CD8-positive, alpha-beta T cell (primary cell): ENCODE measurements at regions of chr17 and their contacts with region 1.

Region 1: GRCh38 chr17:21284319-21285163 is at the start of gene MAP2K3:
- DNase-seq: peak; percentile 84 to 97 (median 94)
- ATAC-seq: peak; percentile 65
- H3K4me3 ChIP-seq: peak within 1 kb of the TSS; percentile 78 to 81
- H3K4me3 Mint-ChIP-seq: peak within 1 kb of the TSS; percentile 94
- H3K27ac ChIP-seq: peak within 1 kb of the TSS; percentile 69 to 99
- H3K27ac Mint-ChIP-seq: peak within 1 kb of the TSS; percentile 96
- H3K4me1 ChIP-seq: peaks cover 45% of the 10 kb centered on the region
- H3K4me1 Mint-ChIP-seq: peaks cover 54% of the 10 kb centered on the region
- H3K27me3 ChIP-seq: no peaks in the 10 kb centered on the region
- H3K27me3 Mint-ChIP-seq: no peaks in the 10 kb centered on the region
- CTCF ChIP-seq: no peak
- total RNA-seq, gene MAP2K3: 59.9 to 63.8 TPM

Region 2: GRCh38 chr17:20032636-20033035 is 1251.9 kb before region 1 on chr17:
- CTCF ChIA-PET with region 1: no interaction called
- POLR2A ChIA-PET with region 1: no interaction called
- intact Hi-C with region 1: no loop called
- DNase-seq: no peak
- ATAC-seq: no peak
- H3K4me3 ChIP-seq: no peak overlapping the region
- H3K4me3 Mint-ChIP-seq: no peak overlapping the region
- H3K27ac ChIP-seq: no peak overlapping the region
- H3K27ac Mint-ChIP-seq: no peak overlapping the region
- H3K4me1 ChIP-seq: no peaks in the 10 kb centered on the region
- H3K4me1 Mint-ChIP-seq: peaks cover 6% of the 10 kb centered on the region
- H3K27me3 ChIP-seq: no peaks in the 10 kb centered on the region
- H3K27me3 Mint-ChIP-seq: no peaks in the 10 kb centered on the region
- CTCF ChIP-seq: no peak

Region 3: DNA sequence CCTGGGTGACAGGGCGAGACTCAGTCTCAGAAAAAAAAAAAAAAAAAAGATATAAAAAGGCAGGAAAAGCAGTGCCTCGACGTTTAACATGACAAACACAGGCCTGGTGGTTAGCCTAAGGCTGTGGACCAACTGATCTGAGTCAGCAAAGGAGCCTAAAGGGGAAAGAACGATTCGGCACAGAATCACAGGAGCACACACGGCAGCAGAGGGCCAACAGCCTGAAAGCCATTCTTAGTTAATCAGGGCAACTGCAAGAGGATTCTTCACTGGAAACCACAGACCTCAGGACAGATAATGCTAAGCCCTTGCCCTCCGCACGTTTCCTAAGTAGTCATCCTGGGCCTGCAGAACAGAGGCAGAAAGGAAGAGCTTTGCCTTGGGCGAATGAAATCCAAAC is 85.2 kb before region 1 on chr17:
- CTCF ChIA-PET with region 1: no interaction called
- POLR2A ChIA-PET with region 1: no interaction called
- intact Hi-C with region 1: no loop called
- DNase-seq: no peak
- ATAC-seq: no peak
- H3K4me3 ChIP-seq: no peak overlapping the region
- H3K4me3 Mint-ChIP-seq: no peak overlapping the region
- H3K27ac ChIP-seq: no peak overlapping the region
- H3K27ac Mint-ChIP-seq: no peak overlapping the region
- H3K4me1 ChIP-seq: no peaks in the 10 kb centered on the region
- H3K4me1 Mint-ChIP-seq: peaks cover 35% of the 10 kb centered on the region
- H3K27me3 ChIP-seq: no peaks in the 10 kb centered on the region
- H3K27me3 Mint-ChIP-seq: no peaks in the 10 kb centered on the region
- CTCF ChIP-seq: no peak

Region 4: GRCh38 chr17:21228104-21228503 is 56.4 kb before region 1 on chr17:
- CTCF ChIA-PET with region 1: no interaction called
- POLR2A ChIA-PET with region 1: no interaction called
- intact Hi-C with region 1: no loop called
- DNase-seq: no peak
- ATAC-seq: no peak
- H3K4me3 ChIP-seq: no peak overlapping the region
- H3K4me3 Mint-ChIP-seq: no peak overlapping the region
- H3K27ac ChIP-seq: no peak overlapping the region
- H3K27ac Mint-ChIP-seq: no peak overlapping the region
- H3K4me1 ChIP-seq: no peaks in the 10 kb centered on the region
- H3K4me1 Mint-ChIP-seq: no peaks in the 10 kb centered on the region
- H3K27me3 ChIP-seq: no peaks in the 10 kb centered on the region
- H3K27me3 Mint-ChIP-seq: no peaks in the 10 kb centered on the region
- CTCF ChIP-seq: no peak

Region 5: DNA sequence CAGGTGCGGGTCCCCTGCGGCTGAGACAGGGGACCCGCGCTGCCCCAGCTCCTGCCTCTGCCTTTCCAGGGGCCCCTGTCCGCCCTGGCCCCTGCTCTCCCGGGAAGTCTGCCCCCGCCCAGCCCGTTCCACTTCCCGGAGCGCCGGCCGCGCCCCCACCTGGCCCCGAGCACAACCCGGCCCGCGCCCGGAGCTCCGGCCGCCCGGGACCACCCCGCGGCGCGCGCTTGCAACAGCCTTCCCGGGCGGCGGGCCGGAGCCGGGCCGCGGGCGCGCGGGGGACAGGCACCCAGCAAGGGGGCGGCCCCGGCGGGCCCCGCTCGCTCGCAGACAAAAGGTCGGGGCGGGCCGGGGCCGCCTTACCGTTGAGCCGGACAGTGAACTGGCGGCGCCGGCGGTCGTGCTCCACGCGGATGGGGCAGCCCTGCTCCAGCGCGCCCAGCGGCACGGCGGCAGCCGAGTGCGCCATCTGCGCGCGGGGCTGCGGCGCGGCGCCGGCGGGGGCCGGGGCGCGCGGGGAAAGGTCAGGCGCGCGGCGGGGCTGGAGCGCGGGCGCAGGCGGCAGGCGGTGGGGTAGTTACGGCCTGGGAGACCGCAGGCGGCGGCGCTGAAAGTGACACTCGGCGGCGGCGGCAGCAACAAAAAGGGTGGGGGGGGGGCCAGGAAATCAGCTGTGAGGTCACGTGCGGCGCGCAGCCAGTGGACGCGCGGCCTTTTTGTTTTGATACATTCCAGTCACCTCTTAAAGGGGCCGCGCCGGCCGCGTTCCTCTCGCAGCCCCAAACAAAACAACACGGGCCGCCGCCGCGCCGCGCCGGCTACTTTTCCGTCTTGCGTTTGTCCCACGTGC is 31.5 kb before region 1 on chr17 and contains the start of gene NATD1:
- CTCF ChIA-PET with region 1: interaction called, 4 read pairs
- POLR2A ChIA-PET with region 1: interaction called, 4 read pairs
- intact Hi-C with region 1: loop called (anchors 1 kb)
- DNase-seq: peak; percentile 54 to 92 (median 80)
- ATAC-seq: peak; percentile 79
- H3K4me3 ChIP-seq: peak within 1 kb of the TSS; percentile 55 to 73
- H3K4me3 Mint-ChIP-seq: peak within 1 kb of the TSS; percentile 86
- H3K27ac ChIP-seq: peak within 1 kb of the TSS; percentile 62 to 64
- H3K27ac Mint-ChIP-seq: peak within 1 kb of the TSS; percentile 92
- H3K4me1 ChIP-seq: peaks cover 17% of the 10 kb centered on the region
- H3K4me1 Mint-ChIP-seq: peaks cover 34% of the 10 kb centered on the region
- H3K27me3 ChIP-seq: no peaks in the 10 kb centered on the region
- H3K27me3 Mint-ChIP-seq: no peaks in the 10 kb centered on the region
- CTCF ChIP-seq: no peak
- total RNA-seq, gene NATD1: 6.3 to 6.6 TPM

Region 6: GRCh38 chr17:21457051-21458026 is 172.8 kb after region 1 on chr17:
- CTCF ChIA-PET with region 1: interaction called, 4 read pairs
- POLR2A ChIA-PET with region 1: no interaction called
- intact Hi-C with region 1: loop called (anchors 1 to 2 kb)
- DNase-seq: peak; percentile 81 to 97 (median 90)
- ATAC-seq: peak; percentile 91
- H3K4me3 ChIP-seq: no peak overlapping the region
- H3K4me3 Mint-ChIP-seq: peak overlapping the region; percentile 15
- H3K27ac ChIP-seq: no peak overlapping the region
- H3K27ac Mint-ChIP-seq: peak overlapping the region; percentile 86
- H3K4me1 ChIP-seq: peaks cover 20% of the 10 kb centered on the region
- H3K4me1 Mint-ChIP-seq: peaks cover 22% of the 10 kb centered on the region
- H3K27me3 ChIP-seq: no peaks in the 10 kb centered on the region
- H3K27me3 Mint-ChIP-seq: peaks cover 7% of the 10 kb centered on the region
- CTCF ChIP-seq: peak; percentile 86

Region 7: DNA sequence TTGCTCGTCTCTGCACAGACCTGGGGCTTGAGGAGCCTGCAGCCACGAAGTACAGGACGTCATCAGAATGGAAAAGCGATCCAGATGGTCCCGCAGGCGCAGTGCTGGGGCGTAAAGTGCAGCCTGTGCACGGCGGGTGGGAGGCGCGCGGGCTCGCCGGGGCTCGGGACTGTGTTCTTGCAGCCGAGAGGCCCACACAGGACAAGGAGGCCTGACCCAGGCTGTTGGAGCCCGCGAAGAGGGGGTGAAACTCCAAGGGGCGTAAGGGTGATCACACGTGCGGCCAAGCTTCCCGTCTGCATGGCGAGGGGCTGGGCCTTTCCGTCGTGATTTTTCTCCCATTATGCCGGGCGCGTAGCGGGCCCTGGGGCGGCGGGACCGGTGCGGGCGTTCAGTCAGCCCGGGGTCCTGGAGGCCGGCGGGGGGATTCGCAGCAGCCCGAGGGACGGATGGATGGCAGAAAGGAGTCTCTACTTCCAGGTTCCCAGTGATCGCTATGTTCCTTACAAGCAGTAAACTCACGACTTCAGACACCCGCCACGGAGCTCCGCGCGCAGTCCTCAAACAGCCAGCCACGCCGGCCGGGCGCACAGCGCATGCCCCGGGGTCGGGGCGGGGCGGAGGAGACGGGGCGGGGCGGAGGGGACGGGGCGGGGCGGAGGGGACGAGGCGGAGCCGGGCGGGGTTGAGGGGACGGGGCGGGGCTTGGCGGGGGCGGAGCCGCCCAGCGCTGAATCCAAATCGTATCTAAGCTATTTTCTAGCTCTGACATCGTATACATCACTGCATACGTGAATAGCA is 266.7 kb after region 1 on chr17:
- CTCF ChIA-PET with region 1: no interaction called
- POLR2A ChIA-PET with region 1: no interaction called
- intact Hi-C with region 1: loop called (anchors 2 to 5 kb)
- DNase-seq: peak; percentile 67 to 89 (median 81)
- ATAC-seq: peak; percentile 94
- H3K4me3 ChIP-seq: peak overlapping the region; percentile 59 to 89
- H3K4me3 Mint-ChIP-seq: peak overlapping the region; percentile 86
- H3K27ac ChIP-seq: peak overlapping the region; percentile 18 to 66
- H3K27ac Mint-ChIP-seq: no peak overlapping the region
- H3K4me1 ChIP-seq: peaks cover 28% of the 10 kb centered on the region
- H3K4me1 Mint-ChIP-seq: peaks cover 35% of the 10 kb centered on the region
- H3K27me3 ChIP-seq: no peaks in the 10 kb centered on the region
- H3K27me3 Mint-ChIP-seq: peaks cover 13% of the 10 kb centered on the region
- CTCF ChIP-seq: no peak